ENCODE measurements at regions of chr5 and their contacts with region 1.

Region 1: DNA sequence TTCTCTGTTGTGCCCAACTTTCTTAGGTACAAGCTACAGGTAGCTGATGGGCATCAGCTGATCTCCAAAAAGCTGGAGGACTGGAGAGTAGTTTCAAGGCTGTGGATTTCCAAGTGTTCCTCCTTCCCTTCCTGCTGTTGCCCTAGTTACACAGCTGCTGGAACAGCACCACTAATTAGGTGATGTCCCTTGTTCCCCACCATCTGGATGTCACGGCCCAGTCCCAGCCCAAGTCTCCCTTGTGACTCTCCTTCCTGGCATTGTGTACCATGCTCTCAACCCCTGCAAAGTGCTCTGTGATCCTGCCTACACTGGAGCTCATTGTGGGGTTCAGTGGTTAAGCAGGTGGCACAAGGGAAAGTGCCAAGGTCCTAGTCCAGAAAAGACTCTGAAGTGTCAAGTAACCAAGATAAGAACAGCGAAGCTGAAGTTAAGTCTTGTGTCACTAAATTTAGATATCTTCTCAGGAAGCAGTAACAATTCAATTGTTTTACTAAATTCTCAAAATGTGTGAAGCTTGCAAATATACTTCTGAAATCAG is 604.5 kb downstream of the ISL1 start:
- DNase-seq: no peak
- H3K4me3 ChIP-seq: no peak overlapping the region
- H3K27ac ChIP-seq: peak overlapping the region in 1 of 2 experiments; percentile 100; a peak in 2 of 4 replicates
- H3K4me1 ChIP-seq: peaks cover 0 to 50% of the 10 kb centered on the region in 2 experiments; a peak in 2 of 4 replicates
- H3K27me3 ChIP-seq: no peaks in the 10 kb centered on the region
- CTCF ChIP-seq: no peak
- EP300 ChIP-seq: no peak
- RAD21 ChIP-seq: no peak

Region 2: GRCh38 chr5:51468196-51468595 is 519.5 kb before region 1 on chr5:
- CTCF ChIA-PET with region 1: interaction called, 14 read pairs
- POLR2A ChIA-PET with region 1: interaction called, 3 read pairs
- DNase-seq: no peak
- H3K4me3 ChIP-seq: peak overlapping the region in 1 of 2 experiments; percentile 41; a peak in 1 of 4 replicates
- H3K27ac ChIP-seq: peak overlapping the region in 1 of 2 experiments; percentile 99; a peak in 2 of 4 replicates
- H3K4me1 ChIP-seq: peaks cover 0 to 48% of the 10 kb centered on the region in 2 experiments; a peak in 2 of 4 replicates
- H3K27me3 ChIP-seq: no peaks in the 10 kb centered on the region
- CTCF ChIP-seq: peak; percentile 49
- EP300 ChIP-seq: peak in 1 of 2 experiments; percentile 13; a peak in 1 of 4 replicates
- RAD21 ChIP-seq: peak; percentile 79

Region 3: DNA sequence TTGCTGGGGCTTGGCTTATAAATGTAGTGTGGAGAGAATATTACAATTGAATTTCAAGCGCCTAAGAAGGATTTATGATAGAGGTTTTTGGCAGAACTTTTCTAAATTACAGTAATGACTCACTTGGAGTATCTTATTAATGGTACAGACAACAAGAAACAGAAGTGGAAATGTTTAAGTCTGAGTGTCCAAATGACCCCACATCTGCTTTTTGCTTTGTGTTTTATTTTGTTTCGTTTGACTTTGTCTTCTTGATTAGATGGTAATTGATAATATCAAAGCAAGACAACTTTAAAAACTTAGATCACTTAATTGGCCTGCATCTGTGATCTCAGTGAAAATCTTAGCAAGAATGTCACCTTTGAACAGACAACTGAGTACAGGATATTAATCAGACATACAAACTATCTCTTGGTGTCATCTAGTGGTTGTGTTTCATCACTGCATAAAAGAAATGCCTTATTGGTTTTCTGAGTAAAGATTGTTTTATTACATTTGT is 27.1 kb before region 1 on chr5:
- CTCF ChIA-PET with region 1: interaction called, 10 read pairs
- POLR2A ChIA-PET with region 1: interaction called, 4 read pairs
- DNase-seq: peak; percentile 12
- H3K4me3 ChIP-seq: no peak overlapping the region
- H3K27ac ChIP-seq: peak overlapping the region in 1 of 2 experiments; percentile 99; a peak in 2 of 4 replicates
- H3K4me1 ChIP-seq: peaks cover 0 to 14% of the 10 kb centered on the region in 2 experiments; a peak in 3 of 4 replicates
- H3K27me3 ChIP-seq: no peaks in the 10 kb centered on the region
- CTCF ChIP-seq: peak; percentile 86
- EP300 ChIP-seq: peak; percentile 36 to 90; a peak in 3 of 4 replicates
- RAD21 ChIP-seq: peak; percentile 93

Region 4: DNA sequence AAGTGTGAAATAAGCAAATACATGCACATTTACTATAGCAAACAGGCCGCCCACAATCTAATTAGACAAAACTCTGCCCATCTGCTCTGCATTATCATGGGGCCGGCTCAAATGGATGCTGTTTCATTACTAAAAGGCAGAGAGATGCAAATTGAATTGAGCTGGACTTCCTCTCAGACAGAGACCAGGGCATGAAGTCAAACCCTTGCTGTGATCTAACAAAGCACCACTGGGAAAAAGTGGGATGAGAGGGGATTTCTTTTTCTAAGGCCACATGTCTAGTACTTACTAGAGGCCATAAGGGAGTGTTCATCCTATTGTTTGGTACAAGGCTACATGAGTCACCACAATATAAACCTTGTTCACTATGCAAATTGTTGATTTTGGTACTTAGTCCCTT is 10.2 kb after region 1 on chr5:
- CTCF ChIA-PET with region 1: interaction called, 3 read pairs
- POLR2A ChIA-PET with region 1: interaction called, 22 read pairs
- DNase-seq: peak; percentile 79
- H3K4me3 ChIP-seq: no peak overlapping the region
- H3K27ac ChIP-seq: peak overlapping the region in 1 of 2 experiments; percentile 100; a peak in 3 of 4 replicates
- H3K4me1 ChIP-seq: peaks cover 0 to 41% of the 10 kb centered on the region in 2 experiments; a peak in 2 of 4 replicates
- H3K27me3 ChIP-seq: no peaks in the 10 kb centered on the region
- CTCF ChIP-seq: no peak
- EP300 ChIP-seq: peak in 1 of 2 experiments; percentile 99; a peak in 2 of 4 replicates
- RAD21 ChIP-seq: peak; percentile 39; the same call in 1 of the 2 replicates

Region 5: GRCh38 chr5:52007230-52007858 is 19.6 kb after region 1 on chr5:
- CTCF ChIA-PET with region 1: interaction called, 18 read pairs
- POLR2A ChIA-PET with region 1: no interaction called
- DNase-seq: peak; percentile 44
- H3K4me3 ChIP-seq: peak overlapping the region in 1 of 2 experiments; percentile 21; a peak in 1 of 4 replicates
- H3K27ac ChIP-seq: peak overlapping the region in 1 of 2 experiments; percentile 94; a peak in 2 of 4 replicates
- H3K4me1 ChIP-seq: peaks cover 0 to 3% of the 10 kb centered on the region in 2 experiments; a peak in 1 of 4 replicates
- H3K27me3 ChIP-seq: no peaks in the 10 kb centered on the region
- CTCF ChIP-seq: peak; percentile 89
- EP300 ChIP-seq: 0 out of 4 replicates have a peak, but pooled peaks of 1 of the 2 experiments have one; percentile 23
- RAD21 ChIP-seq: peak; percentile 98